Activated naive CD4-positive, alpha-beta T cell treated with anti-CD3 and anti-CD28 coated beads for 36 hours (primary cell): ENCODE measurements at regions of chr12 and their contacts with region 1.

Region 1: DNA sequence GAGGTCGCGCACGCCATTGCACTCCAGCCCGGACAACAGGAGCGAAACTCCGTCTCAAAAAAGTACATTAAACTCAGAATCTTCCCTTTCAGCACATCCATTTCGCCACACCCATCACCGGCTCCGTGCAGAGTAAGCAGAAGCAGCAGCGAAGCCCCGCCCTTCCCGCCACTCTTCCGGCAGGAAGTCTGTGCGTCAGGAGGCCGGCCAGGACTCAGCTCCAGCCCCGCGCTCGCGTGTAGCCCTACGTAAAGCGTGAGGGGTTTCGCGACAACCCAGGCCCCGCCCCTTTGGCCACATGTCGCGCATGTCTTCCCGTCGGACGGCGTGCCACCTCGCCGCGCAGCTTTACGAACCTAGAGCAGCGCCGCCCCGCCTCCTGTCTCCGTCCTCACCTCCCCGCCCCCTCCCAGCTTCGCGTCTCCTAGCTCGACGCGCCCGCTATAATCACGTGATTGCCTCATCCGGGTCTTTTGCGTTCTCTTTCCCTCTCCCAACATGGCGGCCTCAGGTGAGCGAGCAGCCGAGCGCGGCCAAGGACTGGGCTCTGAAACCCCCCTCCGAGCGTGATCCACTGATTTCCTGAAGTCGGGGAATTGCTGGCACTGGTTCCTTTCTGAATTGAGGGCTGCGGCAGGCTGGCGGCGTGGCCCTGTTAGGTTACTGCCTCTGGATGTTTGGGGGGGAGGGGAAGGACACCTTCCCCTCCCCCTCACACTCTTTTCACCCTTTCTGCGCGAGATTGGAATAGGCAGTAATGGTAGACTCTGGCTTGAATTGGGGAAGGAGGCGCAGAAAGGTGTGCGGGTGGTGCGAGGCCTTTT is at the start of gene EIF4B:
- DNase-seq: peak; percentile 100
- H3K4me3 Mint-ChIP-seq: peak within 1 kb of the TSS; percentile 92
- H3K27ac Mint-ChIP-seq: peak within 1 kb of the TSS; percentile 93
- H3K4me1 Mint-ChIP-seq: peaks cover 47% of the 10 kb centered on the region
- H3K27me3 Mint-ChIP-seq: no peaks in the 10 kb centered on the region
- total RNA-seq, gene EIF4B: 813 to 821 TPM

Region 2: DNA sequence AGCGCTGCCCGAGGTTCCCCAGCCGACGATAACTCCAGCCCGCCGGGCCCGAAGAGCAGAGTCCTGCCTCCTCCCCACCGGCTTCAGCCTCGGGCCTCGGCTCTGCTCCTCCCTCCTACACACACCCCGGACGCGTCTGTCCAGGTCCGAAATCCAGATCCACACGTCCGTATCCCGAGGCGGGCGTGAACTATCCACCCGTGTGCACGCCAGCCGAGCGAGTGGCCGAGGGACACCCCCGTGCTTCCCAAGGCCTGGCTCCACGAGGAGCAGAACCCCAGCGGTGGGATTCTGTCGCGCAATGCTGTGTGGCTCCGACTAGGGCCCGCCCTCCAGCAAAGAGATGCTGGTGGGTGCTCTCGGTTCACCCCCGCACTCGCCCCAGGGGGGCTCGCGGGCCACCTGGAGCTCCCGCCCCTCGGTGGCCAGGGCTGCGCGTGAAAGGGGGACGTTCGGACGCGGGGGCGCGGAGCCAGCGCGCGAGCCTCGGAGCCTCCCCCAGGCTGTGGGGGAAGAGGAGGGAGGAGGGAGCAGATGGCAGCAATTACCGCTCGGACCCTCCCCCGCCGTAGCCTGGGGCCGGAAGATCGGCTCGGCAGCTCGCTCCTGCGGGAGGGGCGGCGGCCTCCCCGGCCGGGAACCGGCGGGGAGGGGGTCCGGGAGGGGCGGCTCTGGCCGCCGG is 1137.2 kb before region 1 on chr12:
- CTCF ChIA-PET with region 1: no interaction called
- intact Hi-C with region 1: no loop called
- DNase-seq: no peak
- H3K4me3 Mint-ChIP-seq: no peak overlapping the region
- H3K27ac Mint-ChIP-seq: no peak overlapping the region
- H3K4me1 Mint-ChIP-seq: peaks cover 19% of the 10 kb centered on the region
- H3K27me3 Mint-ChIP-seq: peaks cover 48% of the 10 kb centered on the region

Region 3: DNA sequence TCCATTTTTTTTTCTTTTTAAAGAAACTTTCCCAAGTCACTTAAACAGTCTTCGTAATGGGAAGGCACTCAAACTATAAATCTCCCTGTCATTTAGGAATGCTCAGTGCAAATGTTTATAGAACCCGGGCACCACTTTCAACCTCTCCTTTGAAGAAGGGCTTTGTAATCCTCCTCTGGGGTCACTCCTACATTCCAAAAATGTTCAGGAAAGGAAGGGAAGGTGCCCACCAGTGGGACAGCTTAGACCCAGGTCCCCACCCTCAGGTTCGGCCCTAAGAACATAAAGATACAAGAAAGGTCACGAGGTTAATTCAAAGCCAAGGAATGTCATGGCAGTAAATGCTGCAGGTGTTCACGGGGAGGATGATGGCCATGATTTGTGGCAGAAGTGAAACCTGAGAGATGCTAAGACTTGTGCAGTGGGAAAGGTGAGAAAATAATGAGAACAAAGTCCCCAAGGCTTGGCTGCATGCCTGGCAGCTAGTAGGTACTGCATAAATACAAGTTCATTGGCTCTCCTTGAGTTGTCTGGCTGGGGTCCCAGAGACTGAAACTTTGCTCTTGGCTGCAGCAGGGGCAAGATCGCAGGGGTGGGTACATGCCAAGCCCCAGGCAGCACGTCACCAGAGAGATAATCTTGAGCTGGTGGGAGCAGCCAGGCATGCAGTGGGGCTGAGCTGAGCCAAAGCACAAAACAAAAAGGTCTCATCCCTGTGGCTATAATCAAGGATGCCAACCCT is 36.2 kb before region 1 on chr12:
- CTCF ChIA-PET with region 1: no interaction called
- intact Hi-C with region 1: no loop called
- DNase-seq: no peak
- H3K4me3 Mint-ChIP-seq: no peak overlapping the region
- H3K27ac Mint-ChIP-seq: no peak overlapping the region
- H3K4me1 Mint-ChIP-seq: no peaks in the 10 kb centered on the region
- H3K27me3 Mint-ChIP-seq: peaks cover 4% of the 10 kb centered on the region

Region 4: DNA sequence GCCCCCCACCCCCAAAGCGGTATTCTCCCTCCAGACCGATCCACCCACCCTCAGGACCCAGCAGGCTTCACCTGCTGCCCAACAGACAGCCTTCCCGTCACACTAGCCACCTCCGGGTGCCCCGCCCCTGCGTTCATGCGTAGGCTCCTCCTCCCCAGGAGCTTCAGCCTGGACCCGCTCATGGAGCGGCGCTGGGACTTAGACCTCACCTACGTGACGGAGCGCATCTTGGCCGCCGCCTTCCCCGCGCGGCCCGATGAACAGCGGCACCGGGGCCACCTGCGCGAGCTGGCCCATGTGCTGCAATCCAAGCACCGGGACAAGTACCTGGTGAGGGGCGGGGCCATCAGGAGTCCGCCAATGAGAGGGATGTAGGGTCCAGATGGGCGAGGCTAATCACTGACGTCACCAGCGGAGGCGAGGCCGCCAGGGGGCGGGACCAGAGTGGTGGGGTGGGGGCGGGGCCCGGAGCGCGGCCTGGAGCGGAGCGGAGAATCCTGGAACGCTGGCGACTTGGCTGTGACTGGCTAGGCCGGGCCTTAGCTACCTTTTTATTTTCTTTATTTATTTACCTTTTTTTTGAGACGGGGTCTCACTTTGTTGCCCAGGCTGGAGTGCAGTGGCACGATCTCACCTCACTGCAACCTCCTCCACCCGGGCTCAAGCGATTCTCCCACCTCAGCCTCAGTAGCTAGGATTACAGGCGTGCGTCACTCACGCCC is 48.1 kb after region 1 on chr12:
- CTCF ChIA-PET with region 1: interaction called, 3 read pairs
- intact Hi-C with region 1: loop called (anchors 1 kb)
- DNase-seq: peak; percentile 95
- H3K4me3 Mint-ChIP-seq: peak overlapping the region; percentile 95
- H3K27ac Mint-ChIP-seq: peak overlapping the region; percentile 83
- H3K4me1 Mint-ChIP-seq: peaks cover 12% of the 10 kb centered on the region
- H3K27me3 Mint-ChIP-seq: no peaks in the 10 kb centered on the region

Region 5: GRCh38 chr12:53295070-53295890 is 289.1 kb after region 1 on chr12 and contains the start of gene PFDN5:
- CTCF ChIA-PET with region 1: no interaction called
- intact Hi-C with region 1: loop called (anchors 2 kb)
- DNase-seq: peak; percentile 94
- H3K4me3 Mint-ChIP-seq: peak within 1 kb of the TSS; percentile 98
- H3K27ac Mint-ChIP-seq: peak within 1 kb of the TSS; percentile 95
- H3K4me1 Mint-ChIP-seq: peaks cover 53% of the 10 kb centered on the region
- H3K27me3 Mint-ChIP-seq: no peaks in the 10 kb centered on the region
- total RNA-seq, gene PFDN5: 376 to 383 TPM

Region 6: GRCh38 chr12:53451661-53452158 is 445.5 kb after region 1 on chr12 and contains the start of gene PCBP2:
- CTCF ChIA-PET with region 1: interaction called, 3 read pairs
- intact Hi-C with region 1: loop called (anchors 1 kb)
- DNase-seq: peak; percentile 99
- H3K4me3 Mint-ChIP-seq: peak within 1 kb of the TSS; percentile 99
- H3K27ac Mint-ChIP-seq: peak within 1 kb of the TSS; percentile 99
- H3K4me1 Mint-ChIP-seq: peaks cover 36% of the 10 kb centered on the region
- H3K27me3 Mint-ChIP-seq: no peaks in the 10 kb centered on the region
- total RNA-seq, gene PCBP2: 1,085 to 1,132 TPM

Region 7: GRCh38 chr12:53727310-53728041 is 721.3 kb after region 1 on chr12 and contains the start of gene CALCOCO1:
- CTCF ChIA-PET with region 1: no interaction called
- intact Hi-C with region 1: loop called (anchors 1 kb)
- DNase-seq: peak; percentile 99
- H3K4me3 Mint-ChIP-seq: peak within 1 kb of the TSS; percentile 92
- H3K27ac Mint-ChIP-seq: peak within 1 kb of the TSS; percentile 87
- H3K4me1 Mint-ChIP-seq: peaks cover 16% of the 10 kb centered on the region
- H3K27me3 Mint-ChIP-seq: no peaks in the 10 kb centered on the region
- total RNA-seq, gene CALCOCO1: 8.1 to 8.3 TPM